Natural killer cell (primary cell): ENCODE measurements at regions of chr10 and their contacts with region 1.

Region 1: DNA sequence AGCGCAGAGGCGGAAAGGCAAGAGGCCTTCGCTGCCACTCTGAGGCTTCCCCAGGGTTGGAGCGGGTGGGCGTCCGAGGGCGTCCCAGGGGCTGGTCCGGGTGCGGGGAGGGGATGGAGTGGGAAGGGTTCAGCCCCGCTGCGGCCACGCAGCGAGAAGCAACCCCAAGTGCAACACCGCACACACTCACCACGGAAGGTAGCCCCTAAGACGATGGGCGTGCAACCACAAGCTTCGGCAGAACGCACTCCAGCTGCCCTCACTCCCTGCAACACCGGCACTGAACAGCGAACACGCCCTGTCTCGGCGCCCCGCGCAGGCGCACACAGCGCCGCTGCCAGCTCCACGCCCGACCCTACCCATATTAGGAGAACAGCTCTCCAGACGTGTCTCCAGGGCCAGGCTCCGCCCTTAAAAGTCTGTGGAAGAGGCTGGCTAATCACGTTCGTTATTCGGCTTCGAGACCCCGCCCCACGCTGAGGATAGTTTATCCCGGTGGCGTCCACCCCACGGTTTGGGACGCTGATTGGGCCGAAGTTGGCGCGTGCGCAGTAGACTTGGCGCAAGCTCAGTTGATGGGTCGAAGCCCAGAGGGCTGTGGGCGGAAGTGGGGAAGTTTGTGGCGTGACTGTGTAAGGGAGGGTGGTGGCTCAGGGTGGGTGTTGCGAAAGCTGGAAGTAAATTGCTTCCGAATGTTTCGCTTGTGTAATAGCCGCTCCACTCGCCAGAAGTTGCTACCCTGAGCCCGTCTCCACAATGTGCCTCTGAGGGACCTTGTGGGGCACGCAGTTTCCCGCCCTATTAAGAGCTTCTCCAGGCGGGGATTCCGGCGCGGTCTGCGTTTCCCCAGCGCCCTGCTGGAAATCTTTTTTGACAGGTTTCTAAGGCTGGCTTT is at the start of gene RSU1:
- DNase-seq: peak; percentile 100
- ATAC-seq: peak; percentile 96 to 99 (median 96)
- H3K4me3 ChIP-seq: peak within 1 kb of the TSS; percentile 82
- H3K4me3 Mint-ChIP-seq: peak within 1 kb of the TSS; percentile 96
- H3K27ac ChIP-seq: peak within 1 kb of the TSS; percentile 87
- H3K27ac Mint-ChIP-seq: peak within 1 kb of the TSS; percentile 91 to 96
- H3K4me1 ChIP-seq: peaks cover 17% of the 10 kb centered on the region
- H3K4me1 Mint-ChIP-seq: peaks cover 34 to 43% of the 10 kb centered on the region in 2 donors
- H3K27me3 ChIP-seq: no peaks in the 10 kb centered on the region
- H3K27me3 Mint-ChIP-seq: peaks cover 4 to 21% of the 10 kb centered on the region in 2 donors
- CTCF ChIP-seq: no peak
- total RNA-seq, gene RSU1: 75.0 to 85.3 (median 80.0) TPM

Region 2: GRCh38 chr10:15859906-15860691 is 957.3 kb before region 1 on chr10 and contains the start of gene MINDY3:
- intact Hi-C with region 1: loop called (anchors 1 kb)
- DNase-seq: peak; percentile 67 to 92
- ATAC-seq: peak; percentile 89 to 91 (median 90)
- H3K4me3 ChIP-seq: peak within 1 kb of the TSS; percentile 82
- H3K4me3 Mint-ChIP-seq: peak within 1 kb of the TSS; percentile 99
- H3K27ac ChIP-seq: peak within 1 kb of the TSS; percentile 61
- H3K27ac Mint-ChIP-seq: peak within 1 kb of the TSS; percentile 91 to 94
- H3K4me1 ChIP-seq: peaks cover 9% of the 10 kb centered on the region
- H3K4me1 Mint-ChIP-seq: peaks cover 41 to 46% of the 10 kb centered on the region in 2 donors
- H3K27me3 ChIP-seq: peaks cover 7% of the 10 kb centered on the region
- H3K27me3 Mint-ChIP-seq: peaks cover 20 to 26% of the 10 kb centered on the region in 2 donors
- CTCF ChIP-seq: no peak
- total RNA-seq, gene MINDY3: 48.8 to 57.3 (median 53.3) TPM

Region 3: GRCh38 chr10:16436758-16437539 is 380.4 kb before region 1 on chr10 and contains the start of gene PTER:
- intact Hi-C with region 1: loop called (anchors 2 kb)
- DNase-seq: peak; percentile 88 to 97
- ATAC-seq: peak; percentile 99
- H3K4me3 ChIP-seq: peak within 1 kb of the TSS; percentile 63
- H3K4me3 Mint-ChIP-seq: peak within 1 kb of the TSS; percentile 91
- H3K27ac ChIP-seq: peak within 1 kb of the TSS; percentile 66
- H3K27ac Mint-ChIP-seq: peak within 1 kb of the TSS; percentile 82 to 93
- H3K4me1 ChIP-seq: peaks cover 28% of the 10 kb centered on the region
- H3K4me1 Mint-ChIP-seq: peaks cover 45 to 49% of the 10 kb centered on the region in 2 donors
- H3K27me3 ChIP-seq: no peaks in the 10 kb centered on the region
- H3K27me3 Mint-ChIP-seq: no peaks in the 10 kb centered on the region
- CTCF ChIP-seq: no peak
- total RNA-seq, gene PTER: 12.8 to 21.9 (median 21.5) TPM

Region 4: DNA sequence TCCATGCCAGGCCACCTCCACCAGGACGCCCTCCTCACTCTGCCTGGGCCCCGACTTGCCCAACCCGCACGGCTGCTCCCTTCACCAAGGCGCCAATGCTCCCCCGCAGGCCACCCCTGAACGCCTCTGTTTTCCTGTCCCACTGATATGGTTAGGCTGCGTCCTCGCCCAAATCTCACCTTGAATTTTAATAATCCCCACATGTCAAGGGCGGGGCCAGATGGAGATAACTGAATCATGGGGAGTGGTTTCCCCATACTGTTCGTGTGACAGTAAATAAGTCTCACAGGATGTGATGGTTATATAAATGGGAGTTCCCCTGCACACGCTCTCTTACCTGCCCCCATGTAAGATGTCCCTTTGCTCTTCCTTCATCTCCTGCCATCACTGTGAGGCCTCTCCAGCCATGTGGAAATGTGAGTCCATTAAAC is 30.0 kb before region 1 on chr10:
- intact Hi-C with region 1: loop called (anchors 1 kb)
- DNase-seq: peak; percentile 42 to 89
- ATAC-seq: peak; percentile 92 to 96 (median 94)
- H3K4me3 ChIP-seq: no peak overlapping the region
- H3K4me3 Mint-ChIP-seq: peak overlapping the region; percentile 67
- H3K27ac ChIP-seq: peak overlapping the region; percentile 84
- H3K27ac Mint-ChIP-seq: peak overlapping the region; percentile 92 to 93
- H3K4me1 ChIP-seq: peaks cover 23% of the 10 kb centered on the region
- H3K4me1 Mint-ChIP-seq: peaks cover 38 to 49% of the 10 kb centered on the region in 2 donors
- H3K27me3 ChIP-seq: no peaks in the 10 kb centered on the region
- H3K27me3 Mint-ChIP-seq: no peaks in the 10 kb centered on the region
- CTCF ChIP-seq: no peak

Region 5: DNA sequence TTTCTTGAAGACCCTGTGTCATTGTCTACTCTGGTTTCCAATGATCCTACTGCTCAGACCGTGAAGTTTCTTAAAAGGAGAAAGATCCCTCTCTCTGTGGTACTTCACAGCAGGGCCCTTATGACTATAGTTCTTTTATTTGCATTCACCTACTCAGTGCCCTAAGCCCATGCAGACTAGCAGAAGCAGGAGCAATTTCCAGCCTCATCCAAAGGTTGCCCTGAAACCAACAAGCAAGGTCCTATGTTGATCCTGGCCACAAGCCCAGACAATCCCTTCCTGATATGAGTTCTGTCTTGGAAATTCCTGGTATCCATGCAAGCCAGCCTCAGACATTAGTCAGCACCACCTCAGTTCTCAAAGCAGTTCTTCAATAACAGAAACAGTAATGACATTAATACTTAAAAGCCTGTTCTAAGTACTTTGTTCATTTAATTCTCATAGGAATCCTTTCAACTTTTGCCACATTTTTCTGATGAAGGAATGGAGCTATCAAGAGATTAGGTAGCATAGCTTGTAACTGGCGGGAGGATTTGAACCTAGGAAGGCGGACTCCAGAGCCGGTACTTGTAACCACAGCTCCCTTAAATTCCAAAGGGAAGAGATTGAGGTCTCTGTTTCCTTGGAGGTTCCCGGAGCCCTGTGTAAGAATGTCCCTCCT is 695.1 kb after region 1 on chr10:
- intact Hi-C with region 1: loop called (anchors 1 kb)
- DNase-seq: no peak
- ATAC-seq: no peak
- H3K4me3 ChIP-seq: no peak overlapping the region
- H3K4me3 Mint-ChIP-seq: peak overlapping the region; percentile 37
- H3K27ac ChIP-seq: peak overlapping the region; percentile 98
- H3K27ac Mint-ChIP-seq: peak overlapping the region; percentile 87 to 96
- H3K4me1 ChIP-seq: peaks cover 48% of the 10 kb centered on the region
- H3K4me1 Mint-ChIP-seq: peaks cover 45 to 48% of the 10 kb centered on the region in 2 donors
- H3K27me3 ChIP-seq: no peaks in the 10 kb centered on the region
- H3K27me3 Mint-ChIP-seq: no peaks in the 10 kb centered on the region
- CTCF ChIP-seq: no peak

Region 6: DNA sequence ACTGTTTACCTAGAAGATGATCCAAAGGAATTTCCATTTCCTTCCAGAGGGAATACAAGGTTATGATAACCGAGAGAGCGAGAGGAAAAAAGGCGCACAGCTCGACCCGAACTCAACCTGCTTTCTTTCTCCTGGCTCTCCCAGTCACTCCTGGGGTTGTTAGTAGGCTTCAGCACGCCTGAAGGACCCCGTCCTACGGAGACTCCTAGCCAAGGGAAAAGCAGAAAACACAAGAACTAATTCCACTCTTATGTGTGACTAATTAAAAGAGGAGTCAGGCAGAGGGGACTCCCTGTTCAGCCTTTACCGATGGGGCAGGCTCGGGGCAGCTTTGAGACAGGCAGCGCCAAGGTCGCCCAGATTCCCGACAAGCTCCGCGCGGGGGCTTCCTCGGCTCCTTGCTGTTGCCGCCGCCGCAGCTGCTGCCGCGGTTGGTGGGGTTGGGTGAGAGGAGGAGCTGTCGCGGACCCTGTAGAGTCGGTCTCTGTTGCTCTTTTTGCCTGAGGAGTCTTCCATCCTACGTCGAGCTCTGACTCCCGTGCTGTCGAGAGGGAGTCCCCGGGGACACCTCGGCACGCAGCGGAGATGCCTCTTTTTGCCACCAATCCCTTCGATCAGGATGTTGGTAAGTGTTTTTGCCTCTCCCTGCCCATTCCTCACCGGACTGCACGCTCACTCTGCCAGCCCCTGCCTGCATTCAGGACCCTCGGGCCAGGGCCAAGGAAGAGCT is 826.5 kb after region 1 on chr10 and contains the start of gene STAM:
- intact Hi-C with region 1: loop called (anchors 5 kb)
- DNase-seq: peak; percentile 93 to 95
- ATAC-seq: peak; percentile 83 to 94 (median 92)
- H3K4me3 ChIP-seq: peak within 1 kb of the TSS; percentile 88
- H3K4me3 Mint-ChIP-seq: peak within 1 kb of the TSS; percentile 98
- H3K27ac ChIP-seq: peak within 1 kb of the TSS; percentile 96
- H3K27ac Mint-ChIP-seq: peak within 1 kb of the TSS; percentile 98
- H3K4me1 ChIP-seq: peaks cover 28% of the 10 kb centered on the region
- H3K4me1 Mint-ChIP-seq: peaks cover 50 to 53% of the 10 kb centered on the region in 2 donors
- H3K27me3 ChIP-seq: no peaks in the 10 kb centered on the region
- H3K27me3 Mint-ChIP-seq: no peaks in the 10 kb centered on the region
- CTCF ChIP-seq: no peak
- total RNA-seq, gene STAM: 37.8 to 40.2 (median 38.6) TPM